CD8-positive, alpha-beta T cell (primary cell): ENCODE measurements at regions of chr6 and their contacts with region 1.

Region 1: GRCh38 chr6:157274471-157275226 is 48.7 kb downstream of the TMEM242 start:
- DNase-seq: peak; percentile 70 to 95 (median 85)
- ATAC-seq: peak; percentile 79
- H3K4me3 ChIP-seq: peak overlapping the region; percentile 71 to 81
- H3K4me3 Mint-ChIP-seq: peak overlapping the region; percentile 91
- H3K27ac ChIP-seq: peak overlapping the region; percentile 82 to 91
- H3K27ac Mint-ChIP-seq: peak overlapping the region; percentile 96
- H3K4me1 ChIP-seq: peaks cover 11% of the 10 kb centered on the region
- H3K4me1 Mint-ChIP-seq: peaks cover 7% of the 10 kb centered on the region
- H3K27me3 ChIP-seq: no peaks in the 10 kb centered on the region
- H3K27me3 Mint-ChIP-seq: no peaks in the 10 kb centered on the region
- CTCF ChIP-seq: peak; percentile 76

Region 2: DNA sequence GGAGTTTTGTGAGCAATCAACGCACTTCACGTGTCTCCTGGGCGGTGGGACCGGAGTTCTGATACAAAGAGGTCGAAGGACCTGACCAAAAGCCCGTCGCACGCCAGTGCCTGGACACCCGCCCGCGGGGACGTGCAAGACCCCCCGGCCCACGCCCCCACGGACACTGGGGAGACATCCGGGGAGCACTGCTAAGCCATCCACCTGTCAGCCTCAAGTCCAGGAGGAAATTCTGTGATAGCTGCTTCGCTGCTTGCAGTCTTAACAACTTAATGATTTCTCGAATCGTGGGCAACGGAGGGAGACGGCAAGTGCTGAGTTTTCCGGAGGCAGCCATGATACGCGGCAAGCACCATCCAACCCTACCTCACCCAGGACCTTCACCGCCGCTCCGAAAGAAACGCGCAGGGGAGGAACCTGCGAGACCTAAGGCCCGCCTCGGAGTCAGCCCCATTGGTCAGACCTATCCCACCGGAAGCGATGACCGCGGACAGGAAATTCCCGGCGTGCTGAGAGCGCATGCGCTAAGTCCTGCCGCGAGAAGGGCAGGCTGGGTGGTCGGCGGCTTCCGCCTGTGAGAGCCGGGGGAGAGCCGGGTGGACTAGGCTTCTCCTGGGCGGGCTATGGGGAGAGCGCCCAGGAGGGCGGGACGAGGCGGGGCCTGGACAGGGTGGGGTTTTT is 1960.4 kb before region 1 on chr6 and contains the start of gene TFB1M:
- CTCF ChIA-PET with region 1: no interaction called
- POLR2A ChIA-PET with region 1: no interaction called
- intact Hi-C with region 1: loop called (anchors 2 to 5 kb)
- DNase-seq: peak; percentile 91 to 99 (median 97)
- ATAC-seq: peak; percentile 93
- H3K4me3 ChIP-seq: peak within 1 kb of the TSS; percentile 92 to 97
- H3K4me3 Mint-ChIP-seq: peak within 1 kb of the TSS; percentile 98
- H3K27ac ChIP-seq: peak within 1 kb of the TSS; percentile 83 to 87
- H3K27ac Mint-ChIP-seq: peak within 1 kb of the TSS; percentile 97
- H3K4me1 ChIP-seq: peaks cover 7% of the 10 kb centered on the region
- H3K4me1 Mint-ChIP-seq: peaks cover 35% of the 10 kb centered on the region
- H3K27me3 ChIP-seq: no peaks in the 10 kb centered on the region
- H3K27me3 Mint-ChIP-seq: no peaks in the 10 kb centered on the region
- CTCF ChIP-seq: no peak
- total RNA-seq, gene TFB1M: 6.3 to 7.9 TPM

Region 3: DNA sequence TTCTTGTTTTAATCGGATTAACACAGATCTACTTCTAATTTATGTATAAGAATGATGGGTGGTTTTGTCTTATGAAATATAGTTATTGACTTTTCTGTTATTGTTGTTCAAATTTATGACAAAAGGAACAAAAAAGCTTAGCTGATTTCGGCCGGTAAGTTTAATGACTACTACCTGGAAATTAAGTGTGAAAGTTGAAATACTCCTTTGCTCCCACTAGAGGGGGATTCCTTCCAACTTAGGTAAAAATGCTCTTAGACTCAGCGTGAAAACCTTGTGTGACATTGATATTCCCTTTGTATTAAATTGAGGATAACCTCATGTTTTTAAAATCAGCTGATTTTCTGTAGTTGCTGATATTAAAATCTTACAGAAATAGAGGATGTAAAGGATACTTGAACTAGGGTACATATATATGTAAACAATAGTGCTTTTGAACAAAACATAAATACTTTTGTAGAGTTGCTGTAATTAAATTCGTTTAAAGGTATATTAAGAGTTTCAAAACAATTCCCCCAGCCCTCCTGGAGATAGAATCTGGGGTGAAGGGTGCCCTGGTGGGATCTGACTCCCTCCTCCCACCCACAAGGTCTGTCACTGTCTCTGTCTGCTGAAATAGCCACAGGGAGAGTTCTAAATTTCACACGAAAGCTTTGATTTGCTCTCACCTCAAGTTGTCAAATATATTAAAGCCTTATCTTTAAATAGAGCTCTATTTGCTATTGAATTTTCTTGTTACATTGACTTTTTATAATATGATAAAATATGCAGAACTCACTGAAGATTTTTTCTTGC is 240.0 kb before region 1 on chr6:
- CTCF ChIA-PET with region 1: interaction called, 6 read pairs
- POLR2A ChIA-PET with region 1: no interaction called
- intact Hi-C with region 1: loop called in 1 of 2 experiments (anchors 1 kb)
- DNase-seq: peak in 2 of 9 experiments; percentile 61 to 74
- ATAC-seq: peak; percentile 83
- H3K4me3 ChIP-seq: no peak overlapping the region
- H3K4me3 Mint-ChIP-seq: peak overlapping the region; percentile 97
- H3K27ac ChIP-seq: no peak overlapping the region
- H3K27ac Mint-ChIP-seq: peak overlapping the region; percentile 53
- H3K4me1 ChIP-seq: peaks cover 24% of the 10 kb centered on the region
- H3K4me1 Mint-ChIP-seq: peaks cover 33% of the 10 kb centered on the region
- H3K27me3 ChIP-seq: no peaks in the 10 kb centered on the region
- H3K27me3 Mint-ChIP-seq: no peaks in the 10 kb centered on the region
- CTCF ChIP-seq: peak; percentile 77

Region 4: DNA sequence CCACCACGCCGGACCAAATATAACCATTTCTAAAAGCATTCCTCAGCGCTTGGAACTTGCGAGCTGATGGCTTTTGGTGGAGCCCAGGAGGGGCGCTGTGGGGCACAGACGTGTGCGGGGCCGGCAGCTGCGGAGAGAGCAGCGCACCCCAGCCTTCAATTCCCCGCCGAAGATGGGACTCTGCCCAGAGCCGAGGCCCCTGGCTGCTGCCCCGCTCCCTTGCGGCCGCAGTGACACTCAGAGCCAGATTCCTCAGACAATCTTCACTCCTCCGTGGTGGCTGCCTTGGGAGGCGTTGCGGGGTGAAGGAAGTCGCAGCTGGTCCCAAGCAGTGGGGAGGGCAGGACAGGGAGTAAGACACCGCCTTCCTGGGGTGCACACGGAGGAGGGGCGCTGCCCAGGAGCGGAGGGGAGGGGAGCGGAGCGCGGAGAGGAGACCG is 39.0 kb before region 1 on chr6:
- CTCF ChIA-PET with region 1: interaction called, 3 read pairs
- POLR2A ChIA-PET with region 1: no interaction called
- intact Hi-C with region 1: loop called (anchors 5 kb)
- DNase-seq: peak in 7 of 9 experiments; percentile 11 to 77 (median 58)
- ATAC-seq: peak; percentile 88
- H3K4me3 ChIP-seq: peak overlapping the region; percentile 58 to 67
- H3K4me3 Mint-ChIP-seq: peak overlapping the region; percentile 86
- H3K27ac ChIP-seq: no peak overlapping the region
- H3K27ac Mint-ChIP-seq: no peak overlapping the region
- H3K4me1 ChIP-seq: peaks cover 10% of the 10 kb centered on the region
- H3K4me1 Mint-ChIP-seq: peaks cover 20% of the 10 kb centered on the region
- H3K27me3 ChIP-seq: peaks cover 12 to 14% of the 10 kb centered on the region in 2 experiments
- H3K27me3 Mint-ChIP-seq: peaks cover 50% of the 10 kb centered on the region
- CTCF ChIP-seq: peak; percentile 68

Region 5: GRCh38 chr6:157309321-157309720 is 34.7 kb after region 1 on chr6:
- CTCF ChIA-PET with region 1: no interaction called
- POLR2A ChIA-PET with region 1: no interaction called
- intact Hi-C with region 1: no loop called
- DNase-seq: no peak
- ATAC-seq: no peak
- H3K4me3 ChIP-seq: no peak overlapping the region
- H3K4me3 Mint-ChIP-seq: no peak overlapping the region
- H3K27ac ChIP-seq: no peak overlapping the region
- H3K27ac Mint-ChIP-seq: no peak overlapping the region
- H3K4me1 ChIP-seq: no peaks in the 10 kb centered on the region
- H3K4me1 Mint-ChIP-seq: no peaks in the 10 kb centered on the region
- H3K27me3 ChIP-seq: no peaks in the 10 kb centered on the region
- H3K27me3 Mint-ChIP-seq: no peaks in the 10 kb centered on the region
- CTCF ChIP-seq: no peak

Region 6: DNA sequence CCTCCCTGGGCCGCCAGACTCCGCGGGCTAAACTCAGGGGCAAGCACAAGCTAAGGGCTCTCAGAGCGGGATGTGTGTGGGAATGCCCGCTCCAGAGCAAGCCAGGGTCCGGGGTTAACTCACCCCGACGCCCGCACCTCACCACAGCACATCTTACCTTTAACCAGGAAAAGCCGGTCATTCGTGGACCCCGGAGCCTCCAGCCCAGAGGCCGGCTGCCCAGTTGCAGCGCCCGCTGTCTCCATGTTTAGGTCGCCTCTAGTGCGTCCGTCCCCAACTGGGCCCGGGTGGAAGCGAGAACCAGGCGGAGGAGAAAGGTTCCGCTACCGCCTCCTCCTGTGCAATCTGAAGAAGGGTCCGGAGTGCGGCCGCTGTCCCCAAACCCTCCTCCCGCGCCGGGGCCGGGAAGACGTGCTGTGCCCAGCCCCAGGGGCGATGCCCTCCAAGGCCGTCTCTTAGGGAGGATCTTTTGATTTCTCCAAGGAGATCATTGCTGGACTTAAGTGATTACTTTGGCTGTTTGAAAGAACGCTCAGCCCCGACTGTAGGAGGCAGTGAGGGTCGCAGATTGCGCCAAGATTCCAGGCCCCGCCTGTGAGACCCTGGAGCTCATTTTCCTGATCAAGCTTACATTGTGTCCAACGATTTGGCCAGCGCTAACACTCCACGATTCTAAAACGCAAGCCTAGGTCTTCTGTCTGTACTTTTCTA is 48.8 kb after region 1 on chr6 and contains the start of gene TMEM242:
- CTCF ChIA-PET with region 1: no interaction called
- POLR2A ChIA-PET with region 1: interaction called, 3 read pairs
- intact Hi-C with region 1: loop called in 1 of 2 experiments (anchors 1 kb)
- DNase-seq: peak; percentile 78 to 95 (median 87)
- ATAC-seq: peak; percentile 95
- H3K4me3 ChIP-seq: peak within 1 kb of the TSS; percentile 93 to 98
- H3K4me3 Mint-ChIP-seq: peak within 1 kb of the TSS; percentile 88
- H3K27ac ChIP-seq: peak within 1 kb of the TSS; percentile 66 to 75
- H3K27ac Mint-ChIP-seq: peak within 1 kb of the TSS; percentile 86
- H3K4me1 ChIP-seq: peaks cover 8% of the 10 kb centered on the region
- H3K4me1 Mint-ChIP-seq: peaks cover 22% of the 10 kb centered on the region
- H3K27me3 ChIP-seq: no peaks in the 10 kb centered on the region
- H3K27me3 Mint-ChIP-seq: peaks cover 5% of the 10 kb centered on the region
- CTCF ChIP-seq: peak; percentile 24
- total RNA-seq, gene TMEM242: 13.8 to 14.0 TPM

Region 7: GRCh38 chr6:158559895-158560835 is 1285.5 kb after region 1 on chr6 and contains the start of gene TMEM181:
- CTCF ChIA-PET with region 1: no interaction called
- POLR2A ChIA-PET with region 1: no interaction called
- intact Hi-C with region 1: loop called in 1 of 2 experiments (anchors 5 kb)
- DNase-seq: peak; percentile 72 to 95 (median 87)
- ATAC-seq: peak; percentile 89
- H3K4me3 ChIP-seq: peak within 1 kb of the TSS; percentile 61
- H3K4me3 Mint-ChIP-seq: peak within 1 kb of the TSS; percentile 92
- H3K27ac ChIP-seq: peak within 1 kb of the TSS; percentile 74 to 87
- H3K27ac Mint-ChIP-seq: peak within 1 kb of the TSS; percentile 90
- H3K4me1 ChIP-seq: peaks cover 31% of the 10 kb centered on the region
- H3K4me1 Mint-ChIP-seq: peaks cover 45% of the 10 kb centered on the region
- H3K27me3 ChIP-seq: no peaks in the 10 kb centered on the region
- H3K27me3 Mint-ChIP-seq: no peaks in the 10 kb centered on the region
- CTCF ChIP-seq: no peak
- total RNA-seq, gene TMEM181: 9.3 to 10.3 TPM